Activated CD8-positive, alpha-beta T cell treated with anti-CD3 and anti-CD28 coated beads, Interleukin-2, amount 10 ng/mL, durations not matched to agents 7 days and 5 days (primary cell): ENCODE measurements at regions of chr4 and their contacts with region 1.

Region 1: GRCh38 chr4:127606823-127607222 is 25.9 kb upstream of the INTU start:
- DNase-seq: no peak
- ATAC-seq: no peak
- H3K4me3 Mint-ChIP-seq: no peak overlapping the region
- H3K27ac Mint-ChIP-seq: no peak overlapping the region
- H3K4me1 Mint-ChIP-seq: no peaks in the 10 kb centered on the region
- H3K27me3 Mint-ChIP-seq: peaks cover 2% of the 10 kb centered on the region

Region 2: DNA sequence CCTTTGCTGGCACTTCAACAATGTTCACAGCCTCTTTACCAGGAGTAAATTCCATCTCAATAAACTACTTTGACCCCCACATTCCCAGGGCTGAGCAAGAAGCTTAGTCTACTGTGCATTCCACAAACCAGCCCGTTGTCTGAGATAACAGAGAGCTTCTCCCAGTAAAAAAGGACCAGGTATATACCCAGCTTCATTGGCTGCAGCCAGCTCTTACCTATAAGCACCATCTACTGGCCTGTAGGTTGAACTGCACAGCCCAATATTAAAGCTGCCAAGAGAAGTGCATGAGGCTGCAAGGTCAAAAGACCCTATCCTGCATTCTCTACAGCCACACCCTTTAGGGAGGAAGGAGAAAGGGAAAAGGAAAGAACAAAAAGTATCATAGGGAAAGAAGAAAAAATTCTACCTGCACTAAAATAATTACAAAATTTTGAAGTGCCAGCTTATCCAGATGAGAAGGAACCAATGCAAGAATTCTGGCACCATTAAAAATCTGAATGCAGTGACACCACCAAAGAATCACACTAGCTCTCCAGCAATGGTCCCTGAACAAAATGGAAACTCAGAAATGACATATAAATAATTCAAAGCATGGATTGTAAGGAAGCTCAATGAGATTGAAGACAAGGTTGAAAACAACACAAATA is 19.8 kb before region 1 on chr4:
- CTCF ChIA-PET with region 1: no interaction called
- POLR2A ChIA-PET with region 1: no interaction called
- DNase-seq: no peak
- ATAC-seq: peak; percentile 55
- H3K4me3 Mint-ChIP-seq: no peak overlapping the region
- H3K27ac Mint-ChIP-seq: no peak overlapping the region
- H3K4me1 Mint-ChIP-seq: no peaks in the 10 kb centered on the region
- H3K27me3 Mint-ChIP-seq: no peaks in the 10 kb centered on the region

Region 3: GRCh38 chr4:127632420-127633403 is 25.9 kb after region 1 on chr4 and contains the start of gene INTU:
- CTCF ChIA-PET with region 1: no interaction called
- POLR2A ChIA-PET with region 1: no interaction called
- DNase-seq: peak; percentile 48
- ATAC-seq: peak; percentile 91
- H3K4me3 Mint-ChIP-seq: peak within 1 kb of the TSS; percentile 68
- H3K27ac Mint-ChIP-seq: no peak within 1 kb of the TSS
- H3K4me1 Mint-ChIP-seq: peaks cover 11% of the 10 kb centered on the region
- H3K27me3 Mint-ChIP-seq: peaks cover 36% of the 10 kb centered on the region
- total RNA-seq, gene INTU: 0.16 to 0.37 TPM

Region 4: DNA sequence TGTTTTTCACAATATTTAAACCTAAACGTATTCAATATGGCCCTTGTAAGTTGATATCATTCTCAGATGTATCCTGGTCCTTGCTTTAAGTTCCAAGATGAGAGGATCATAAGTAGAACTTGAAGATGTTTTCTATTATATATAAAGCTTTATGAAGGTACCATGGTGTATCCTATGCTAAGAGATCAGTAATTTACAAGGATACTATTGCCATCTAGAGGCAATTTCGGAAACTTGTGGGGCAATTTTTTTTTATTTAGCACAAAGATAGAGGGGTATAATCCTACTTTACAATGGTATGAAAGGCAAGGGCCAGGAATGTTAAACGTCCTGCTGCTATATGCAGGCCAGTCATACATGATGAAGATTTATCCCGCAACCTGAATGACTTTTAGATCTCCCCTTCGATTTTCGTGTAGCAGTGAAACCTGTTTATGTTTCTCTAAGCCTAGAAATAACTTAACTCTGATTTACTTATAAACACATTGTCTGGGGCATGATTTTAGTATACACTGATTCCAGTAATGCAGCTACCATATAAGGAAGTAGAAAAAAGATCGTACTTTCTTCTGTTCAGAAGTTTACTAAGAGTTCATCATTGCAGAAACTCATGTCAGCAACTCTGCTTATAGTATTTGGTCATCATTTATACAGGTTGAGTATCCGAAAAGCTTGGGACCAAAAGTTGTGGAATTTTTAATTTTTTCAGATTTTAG is 125.9 kb after region 1 on chr4:
- CTCF ChIA-PET with region 1: interaction called, 11 read pairs
- POLR2A ChIA-PET with region 1: no interaction called
- DNase-seq: no peak
- ATAC-seq: no peak
- H3K4me3 Mint-ChIP-seq: no peak overlapping the region
- H3K27ac Mint-ChIP-seq: no peak overlapping the region
- H3K4me1 Mint-ChIP-seq: no peaks in the 10 kb centered on the region
- H3K27me3 Mint-ChIP-seq: peaks cover 1% of the 10 kb centered on the region

Region 5: GRCh38 chr4:127798446-127798845 is 191.6 kb after region 1 on chr4:
- CTCF ChIA-PET with region 1: no interaction called
- POLR2A ChIA-PET with region 1: no interaction called
- DNase-seq: no peak
- ATAC-seq: no peak
- H3K4me3 Mint-ChIP-seq: no peak overlapping the region
- H3K27ac Mint-ChIP-seq: no peak overlapping the region
- H3K4me1 Mint-ChIP-seq: no peaks in the 10 kb centered on the region
- H3K27me3 Mint-ChIP-seq: peaks cover 14% of the 10 kb centered on the region